ENCODE measurements at regions of chr20 and their contacts with region 1.

Region 1: DNA sequence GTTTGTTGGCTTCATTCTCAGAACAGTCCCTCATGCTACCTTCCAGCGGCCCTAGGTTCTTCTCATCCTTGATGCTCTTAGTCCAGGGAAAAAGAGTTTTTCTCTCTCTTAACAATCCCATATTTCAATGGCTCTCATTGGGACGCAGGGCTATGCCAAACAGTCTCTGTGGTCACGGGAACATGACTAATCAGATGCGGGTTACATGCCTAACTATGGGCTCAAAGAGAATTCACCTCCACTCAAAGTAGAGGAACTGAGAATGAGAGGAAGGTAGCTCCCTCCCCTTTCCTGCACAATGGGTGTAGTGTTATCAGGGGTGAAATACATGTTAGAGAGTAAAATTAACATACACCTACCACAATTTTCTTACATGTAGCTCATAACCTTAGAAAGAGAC is 18.1 kb upstream of the ATRN start:
- DNase-seq: peak; percentile 39
- H3K4me3 ChIP-seq: no peak overlapping the region
- H3K27ac ChIP-seq: no peak overlapping the region
- H3K4me1 ChIP-seq: no peaks in the 10 kb centered on the region
- H3K27me3 ChIP-seq: peaks cover 2% of the 10 kb centered on the region
- CTCF ChIP-seq: no peak

Region 2: DNA sequence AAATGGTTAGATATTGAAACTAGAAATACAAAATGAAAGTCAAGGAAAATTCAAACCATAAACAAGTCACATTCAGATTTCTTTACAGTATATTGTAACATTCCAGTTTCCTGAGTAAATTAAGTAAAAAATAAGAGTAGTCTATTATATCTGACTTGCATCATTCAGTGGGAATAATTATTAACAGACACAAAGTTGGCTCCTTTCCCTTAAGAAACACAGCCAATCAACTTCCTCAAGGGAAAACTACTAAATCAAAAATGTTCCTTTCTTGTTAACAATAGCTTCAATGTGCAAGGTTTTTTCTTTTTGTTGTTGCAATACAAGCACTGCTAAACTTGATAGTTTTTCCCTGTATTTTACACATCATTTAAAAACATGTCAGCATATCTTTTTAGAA is 78.4 kb before region 1 on chr20:
- CTCF ChIA-PET with region 1: no interaction called
- dilution Hi-C with region 1: loop called (anchors 5 kb)
- in situ Hi-C with region 1: no loop called
- intact Hi-C with region 1: no loop called
- DNase-seq: no peak
- H3K4me3 ChIP-seq: no peak overlapping the region
- H3K27ac ChIP-seq: no peak overlapping the region
- H3K4me1 ChIP-seq: no peaks in the 10 kb centered on the region
- H3K27me3 ChIP-seq: no peaks in the 10 kb centered on the region
- CTCF ChIP-seq: no peak

Region 3: GRCh38 chr20:3434232-3434631 is 18.5 kb before region 1 on chr20:
- CTCF ChIA-PET with region 1: no interaction called
- dilution Hi-C with region 1: no loop called
- in situ Hi-C with region 1: no loop called
- intact Hi-C with region 1: no loop called
- DNase-seq: no peak
- H3K4me3 ChIP-seq: no peak overlapping the region
- H3K27ac ChIP-seq: no peak overlapping the region
- H3K4me1 ChIP-seq: no peaks in the 10 kb centered on the region
- H3K27me3 ChIP-seq: no peaks in the 10 kb centered on the region
- CTCF ChIP-seq: no peak